HEK293 (cell line): ENCODE measurements at regions of chr7 and their contacts with region 1.

Region 1: GRCh38 chr7:25098096-25099046 is 26.7 kb downstream of the CYCS start:
- H3K4me3 ChIP-seq: no peak overlapping the region
- H3K27ac ChIP-seq: no peak overlapping the region
- H3K4me1 ChIP-seq: no peaks in the 10 kb centered on the region
- CTCF ChIP-seq: peak; percentile 63

Region 2: DNA sequence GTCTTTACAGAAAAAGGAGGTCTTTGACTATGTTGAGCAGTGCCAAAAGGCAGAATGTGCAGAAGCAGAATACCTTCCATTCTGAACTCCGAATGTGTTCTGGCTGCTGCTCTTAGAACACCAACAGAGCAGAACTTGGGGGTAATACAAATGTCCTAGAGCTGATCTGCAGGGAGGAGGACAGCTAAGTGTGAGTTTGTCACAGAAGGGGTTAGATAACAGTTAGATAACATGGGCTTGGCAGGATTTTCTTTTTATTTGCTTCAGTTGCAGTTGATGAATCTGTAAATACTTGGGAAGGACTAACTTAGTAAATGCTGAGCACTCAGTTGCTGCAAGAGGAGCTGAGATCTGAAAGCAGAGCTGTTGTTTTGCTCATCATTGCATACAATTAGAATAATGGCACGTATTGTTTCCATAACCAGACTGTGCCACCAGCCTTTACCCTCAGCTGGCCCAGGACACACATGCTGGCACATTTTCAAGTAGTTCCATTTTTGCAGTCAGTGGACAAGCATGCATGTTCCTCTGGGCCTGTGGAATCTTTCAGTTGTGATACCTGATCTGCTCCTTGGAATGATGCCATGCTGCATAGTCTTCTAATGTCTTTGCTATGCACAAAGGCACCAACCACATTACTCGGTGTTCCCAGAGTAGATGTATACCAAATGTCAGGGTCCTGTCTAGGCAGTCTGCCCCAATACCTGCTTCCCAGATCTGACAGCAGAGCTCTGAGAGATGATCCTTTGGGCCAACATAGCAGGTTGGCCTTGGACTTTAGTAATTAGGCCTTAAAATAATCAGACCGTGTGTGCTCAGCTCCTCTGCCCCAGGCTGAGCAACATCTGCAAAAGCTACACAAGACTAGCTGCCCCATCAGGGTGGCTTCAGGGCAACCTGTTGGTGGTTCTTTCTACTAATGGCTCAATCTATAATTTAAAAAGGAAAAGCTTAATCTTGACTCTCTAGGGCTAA is 396.8 kb before region 1 on chr7:
- CTCF ChIA-PET with region 1: interaction called, 11 read pairs
- POLR2A ChIA-PET with region 1: no interaction called
- H3K4me3 ChIP-seq: no peak overlapping the region
- H3K27ac ChIP-seq: no peak overlapping the region
- H3K4me1 ChIP-seq: peaks cover 4% of the 10 kb centered on the region
- CTCF ChIP-seq: no peak

Region 3: DNA sequence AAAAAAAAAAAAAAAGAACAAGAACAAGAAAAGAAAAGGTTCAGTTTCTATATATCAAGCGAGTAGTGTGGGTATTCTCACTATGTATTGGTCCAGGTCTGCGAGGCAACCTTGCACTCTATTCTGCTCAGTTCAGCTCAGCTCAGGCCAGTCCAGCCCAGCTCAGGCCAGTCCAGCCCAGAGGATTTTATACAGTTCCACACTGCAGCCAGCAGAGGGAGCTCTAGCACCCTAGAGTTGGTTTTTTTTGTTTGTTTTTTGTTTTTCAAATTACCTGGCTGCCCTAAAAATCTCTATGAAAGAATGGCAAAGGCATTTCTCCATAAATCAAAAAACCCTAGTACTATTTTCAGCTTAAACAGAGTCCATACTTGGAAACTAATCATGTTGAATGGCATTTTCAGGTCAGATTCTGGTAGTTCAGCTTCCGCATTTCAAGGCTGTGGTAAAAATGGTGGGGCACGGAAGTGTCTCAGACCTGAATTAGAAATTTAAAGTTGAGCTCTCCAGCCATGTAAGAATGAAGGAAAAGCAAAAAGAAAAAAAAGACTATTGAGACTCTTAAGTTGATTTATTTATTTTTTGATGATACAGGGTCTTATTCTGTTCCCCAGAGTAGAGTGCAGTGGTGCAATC is 285.9 kb before region 1 on chr7:
- CTCF ChIA-PET with region 1: interaction called, 142 read pairs
- POLR2A ChIA-PET with region 1: no interaction called
- H3K4me3 ChIP-seq: no peak overlapping the region
- H3K27ac ChIP-seq: no peak overlapping the region
- H3K4me1 ChIP-seq: no peaks in the 10 kb centered on the region
- CTCF ChIP-seq: peak; percentile 42

Region 4: DNA sequence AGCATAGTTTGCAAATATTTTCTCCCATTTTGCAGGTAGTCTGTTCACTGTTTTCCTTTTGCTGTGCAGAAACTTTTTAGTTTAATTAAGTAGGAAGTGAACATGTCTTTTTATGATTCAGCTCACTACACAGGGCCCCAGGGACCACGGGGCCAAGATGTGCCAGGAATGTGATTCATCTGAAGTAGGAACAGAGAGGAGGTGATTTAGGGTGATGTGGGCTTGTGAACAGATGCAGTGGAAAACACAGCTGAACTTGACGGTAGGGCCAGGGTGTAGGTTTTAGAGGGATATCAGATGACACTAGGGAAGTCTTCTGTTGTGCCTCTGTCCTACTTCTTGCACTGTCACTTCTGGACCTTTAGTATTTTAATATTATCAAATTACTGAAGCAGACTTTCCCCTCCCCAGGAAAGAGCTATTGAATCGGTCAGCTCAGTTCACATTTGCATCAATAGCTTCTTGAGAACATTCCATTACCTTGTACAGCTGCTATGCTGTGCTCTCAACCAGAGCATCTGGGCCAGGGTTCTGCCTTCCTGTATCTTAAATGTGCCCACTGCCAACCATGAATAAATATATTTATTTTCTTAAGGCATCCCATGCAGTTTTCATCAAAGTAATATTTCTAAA is 215.3 kb before region 1 on chr7:
- CTCF ChIA-PET with region 1: interaction called, 11 read pairs
- POLR2A ChIA-PET with region 1: no interaction called
- H3K4me3 ChIP-seq: no peak overlapping the region
- H3K27ac ChIP-seq: no peak overlapping the region
- H3K4me1 ChIP-seq: peaks cover 32% of the 10 kb centered on the region
- CTCF ChIP-seq: no peak

Region 5: DNA sequence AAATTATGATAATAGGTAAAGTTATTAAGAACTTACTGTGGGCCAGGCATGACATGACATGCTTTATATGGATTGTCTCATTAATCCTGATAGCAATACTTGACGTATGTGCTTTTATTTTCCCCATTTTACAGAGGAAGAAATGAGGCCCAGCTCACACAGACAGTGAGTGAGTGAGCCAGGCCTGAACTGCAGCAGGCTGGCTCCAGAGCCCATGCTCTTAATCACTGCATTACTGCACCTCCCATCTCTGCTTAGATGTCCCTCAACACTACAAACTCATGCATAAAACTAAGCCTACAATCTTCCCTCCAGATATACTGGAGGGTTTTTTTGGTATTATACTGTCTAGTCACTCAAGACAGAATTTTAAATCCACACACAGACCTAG is 49.9 kb before region 1 on chr7:
- CTCF ChIA-PET with region 1: no interaction called
- POLR2A ChIA-PET with region 1: no interaction called
- H3K4me3 ChIP-seq: no peak overlapping the region
- H3K27ac ChIP-seq: no peak overlapping the region
- H3K4me1 ChIP-seq: no peaks in the 10 kb centered on the region
- CTCF ChIP-seq: no peak

Region 6: DNA sequence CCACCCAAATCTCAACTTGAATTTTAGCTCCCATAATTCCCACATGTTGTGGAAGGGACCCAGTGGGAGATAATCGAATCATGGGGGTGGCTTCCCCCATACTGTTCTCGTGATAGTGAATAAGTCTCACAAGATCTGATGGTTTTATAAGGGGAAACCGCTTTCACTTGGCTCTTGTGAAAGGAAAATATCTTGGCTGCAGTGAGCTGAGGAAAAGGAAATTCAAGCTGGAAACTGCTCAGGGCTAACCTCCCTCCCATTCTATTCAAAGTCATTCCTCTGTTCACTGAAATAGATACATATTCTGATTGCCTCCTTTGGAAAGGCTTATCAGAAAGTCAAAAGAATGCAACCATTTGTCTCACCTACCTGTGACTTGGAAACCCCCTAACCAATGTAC is 10.9 kb after region 1 on chr7:
- CTCF ChIA-PET with region 1: interaction called, 24 read pairs
- POLR2A ChIA-PET with region 1: no interaction called
- H3K4me3 ChIP-seq: no peak overlapping the region
- H3K27ac ChIP-seq: no peak overlapping the region
- H3K4me1 ChIP-seq: no peaks in the 10 kb centered on the region
- CTCF ChIP-seq: no peak

Region 7: GRCh38 chr7:25125137-25125946 is 27.0 kb after region 1 on chr7 and contains the start of gene CYCS:
- CTCF ChIA-PET with region 1: interaction called, 18 read pairs
- POLR2A ChIA-PET with region 1: interaction called, 9 read pairs
- H3K4me3 ChIP-seq: peak within 1 kb of the TSS; percentile 90
- H3K27ac ChIP-seq: peak within 1 kb of the TSS; percentile 72
- H3K4me1 ChIP-seq: no peaks in the 10 kb centered on the region
- CTCF ChIP-seq: 0 out of 2 replicates have a peak, but pooled peaks have one; percentile 9

Region 8: DNA sequence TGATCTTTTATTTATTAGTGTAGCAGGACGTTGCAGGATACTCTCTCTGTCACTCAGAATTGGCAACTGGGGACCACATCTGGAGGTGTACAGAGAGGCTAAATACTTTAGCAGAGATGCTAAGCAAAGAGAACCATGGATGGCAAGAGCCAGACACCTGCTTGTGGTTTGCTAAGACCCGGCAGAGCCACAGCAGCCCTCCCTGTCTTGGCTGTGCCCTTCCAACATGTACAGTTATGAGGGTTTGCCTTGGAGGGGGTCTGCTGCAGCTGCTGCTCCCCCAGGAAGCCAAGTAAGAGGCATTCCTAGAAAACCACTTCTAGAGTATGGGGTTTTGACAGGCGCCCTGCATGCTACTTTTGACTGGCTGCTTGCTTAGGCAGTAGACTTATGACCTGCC is 124.8 kb after region 1 on chr7:
- CTCF ChIA-PET with region 1: no interaction called
- POLR2A ChIA-PET with region 1: no interaction called
- H3K4me3 ChIP-seq: no peak overlapping the region
- H3K27ac ChIP-seq: no peak overlapping the region
- H3K4me1 ChIP-seq: no peaks in the 10 kb centered on the region
- CTCF ChIP-seq: no peak

Region 9: GRCh38 chr7:25989140-25989705 is 890.9 kb after region 1 on chr7:
- CTCF ChIA-PET with region 1: no interaction called
- POLR2A ChIA-PET with region 1: no interaction called
- H3K4me3 ChIP-seq: no peak overlapping the region
- H3K27ac ChIP-seq: no peak overlapping the region
- H3K4me1 ChIP-seq: no peaks in the 10 kb centered on the region
- CTCF ChIP-seq: no peak